ENCODE measurements at regions of chr4 and their contacts with region 1.

Region 1: DNA sequence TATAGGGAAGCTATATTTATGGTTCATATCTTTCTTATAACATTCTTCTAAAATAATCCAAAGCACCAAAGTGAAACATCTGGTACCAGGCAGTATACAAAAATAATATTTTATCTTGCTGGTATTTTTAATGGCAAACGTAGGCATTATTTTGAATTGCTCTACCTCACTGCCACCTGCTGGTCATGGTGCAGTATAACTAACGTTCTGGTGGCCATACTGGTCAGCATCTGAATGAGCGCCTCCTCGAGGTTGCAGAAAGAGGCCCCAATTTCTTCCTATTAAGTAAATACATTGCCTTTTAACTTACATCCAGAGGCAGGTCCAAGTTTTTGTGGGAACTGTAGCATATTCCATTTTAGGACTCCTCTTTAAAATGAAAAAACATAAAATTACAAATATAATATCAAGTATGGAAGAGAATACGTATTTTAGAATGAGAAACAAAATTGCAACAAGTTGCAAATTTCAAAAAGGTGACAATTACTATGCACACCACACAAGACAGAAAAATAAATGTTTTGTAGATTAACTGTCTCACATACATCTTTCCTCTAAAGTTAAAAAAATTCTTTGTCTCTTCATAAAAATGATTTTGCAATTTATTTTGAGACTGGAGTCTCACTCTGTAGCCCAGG is 22.9 kb upstream of the CWH43 start:
- DNase-seq: peak; percentile 75 to 89 (median 80)
- H3K4me3 ChIP-seq: no peak overlapping the region
- H3K27ac ChIP-seq: no peak overlapping the region
- H3K4me1 ChIP-seq: no peaks in the 10 kb centered on the region
- H3K27me3 ChIP-seq: no peaks in the 10 kb centered on the region
- CTCF ChIP-seq: peak; percentile 93 to 99 (median 97)
- POLR2A ChIP-seq: no peak

Region 2: GRCh38 chr4:48570646-48571220 is 392.4 kb before region 1 on chr4:
- intact Hi-C with region 1: loop called (anchors 5 to 10 kb)
- DNase-seq: no peak
- H3K4me3 ChIP-seq: no peak overlapping the region
- H3K27ac ChIP-seq: no peak overlapping the region
- H3K4me1 ChIP-seq: peaks cover 0 to 12% of the 10 kb centered on the region in 2 donors
- H3K27me3 ChIP-seq: no peaks in the 10 kb centered on the region
- CTCF ChIP-seq: no peak
- POLR2A ChIP-seq: no peak

Region 3: GRCh38 chr4:48578132-48578968 is 384.8 kb before region 1 on chr4:
- intact Hi-C with region 1: loop called (anchors 5 to 10 kb)
- DNase-seq: peak; percentile 71 to 87 (median 74)
- H3K4me3 ChIP-seq: no peak overlapping the region
- H3K27ac ChIP-seq: no peak overlapping the region
- H3K4me1 ChIP-seq: no peaks in the 10 kb centered on the region
- H3K27me3 ChIP-seq: no peaks in the 10 kb centered on the region
- CTCF ChIP-seq: peak; percentile 71 to 98 (median 93)
- POLR2A ChIP-seq: no peak

Measured in adrenal gland (tissue), 19 donors.